ENCODE measurements at regions of chrX and their contacts with region 1.

Region 1: DNA sequence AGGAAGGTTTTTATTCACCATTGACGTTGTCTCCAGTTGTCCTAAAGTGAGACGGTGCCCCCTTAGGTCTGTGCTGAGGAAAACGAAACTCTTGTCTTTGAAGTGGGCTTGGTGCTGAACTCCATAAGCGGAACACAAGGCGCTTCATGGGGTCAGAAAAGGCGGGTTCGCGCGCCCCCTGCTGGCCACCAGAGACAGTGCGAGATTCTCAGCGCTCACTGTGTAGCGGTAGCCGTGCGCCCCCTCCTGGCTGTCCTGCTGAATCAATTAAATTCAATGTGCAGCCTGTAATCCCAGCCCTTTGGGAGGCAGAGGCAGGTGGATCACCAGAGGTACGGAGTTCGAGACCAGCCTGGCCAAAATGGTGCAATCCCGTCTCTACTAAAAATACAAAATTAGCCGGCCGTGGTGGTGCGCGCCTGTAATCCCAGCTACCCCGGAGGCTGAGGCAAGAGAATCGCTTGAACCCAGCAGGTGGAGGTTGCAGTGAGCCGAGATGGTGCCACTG is 64.1 kb downstream of the RLIM start:
- DNase-seq: peak; percentile 85
- H3K4me3 Mint-ChIP-seq: no peak overlapping the region
- H3K27ac Mint-ChIP-seq: no peak overlapping the region
- H3K4me1 Mint-ChIP-seq: peaks cover 2% of the 10 kb centered on the region
- H3K27me3 Mint-ChIP-seq: no peaks in the 10 kb centered on the region

Region 2: DNA sequence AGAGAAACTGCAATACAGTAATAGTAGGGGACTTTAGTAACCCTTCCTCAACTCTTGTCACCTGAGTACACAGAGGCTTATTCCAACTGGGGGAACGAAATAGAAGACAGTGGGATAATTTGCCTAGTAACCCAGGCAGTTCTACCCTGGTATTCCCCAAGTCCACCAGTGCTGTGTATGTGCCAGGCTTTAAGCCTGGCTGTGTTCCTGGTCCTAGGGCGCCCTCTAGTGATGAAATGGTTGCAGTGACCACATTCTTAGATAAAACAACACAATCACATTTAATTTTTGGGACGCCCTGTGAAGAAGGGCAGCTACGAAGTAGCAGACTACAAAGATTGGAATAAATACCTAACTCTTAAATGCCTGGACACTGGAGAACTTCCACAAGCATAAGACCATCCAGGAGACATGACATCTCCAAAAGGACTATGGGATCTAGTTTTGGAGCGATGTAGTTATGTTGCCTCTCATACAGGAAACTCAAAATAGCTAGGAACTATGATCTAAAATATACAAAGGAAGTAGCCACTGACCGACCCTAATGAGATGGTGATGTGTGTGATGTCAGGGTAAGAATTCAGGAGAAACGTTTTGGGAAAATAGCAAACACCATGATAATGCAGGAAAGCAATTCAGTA is 534.9 kb before region 1 on chrX:
- CTCF ChIA-PET with region 1: no interaction called
- intact Hi-C with region 1: loop called (anchors 2 kb)
- DNase-seq: peak; percentile 72
- H3K4me3 Mint-ChIP-seq: no peak overlapping the region
- H3K27ac Mint-ChIP-seq: no peak overlapping the region
- H3K4me1 Mint-ChIP-seq: no peaks in the 10 kb centered on the region
- H3K27me3 Mint-ChIP-seq: no peaks in the 10 kb centered on the region

Region 3: DNA sequence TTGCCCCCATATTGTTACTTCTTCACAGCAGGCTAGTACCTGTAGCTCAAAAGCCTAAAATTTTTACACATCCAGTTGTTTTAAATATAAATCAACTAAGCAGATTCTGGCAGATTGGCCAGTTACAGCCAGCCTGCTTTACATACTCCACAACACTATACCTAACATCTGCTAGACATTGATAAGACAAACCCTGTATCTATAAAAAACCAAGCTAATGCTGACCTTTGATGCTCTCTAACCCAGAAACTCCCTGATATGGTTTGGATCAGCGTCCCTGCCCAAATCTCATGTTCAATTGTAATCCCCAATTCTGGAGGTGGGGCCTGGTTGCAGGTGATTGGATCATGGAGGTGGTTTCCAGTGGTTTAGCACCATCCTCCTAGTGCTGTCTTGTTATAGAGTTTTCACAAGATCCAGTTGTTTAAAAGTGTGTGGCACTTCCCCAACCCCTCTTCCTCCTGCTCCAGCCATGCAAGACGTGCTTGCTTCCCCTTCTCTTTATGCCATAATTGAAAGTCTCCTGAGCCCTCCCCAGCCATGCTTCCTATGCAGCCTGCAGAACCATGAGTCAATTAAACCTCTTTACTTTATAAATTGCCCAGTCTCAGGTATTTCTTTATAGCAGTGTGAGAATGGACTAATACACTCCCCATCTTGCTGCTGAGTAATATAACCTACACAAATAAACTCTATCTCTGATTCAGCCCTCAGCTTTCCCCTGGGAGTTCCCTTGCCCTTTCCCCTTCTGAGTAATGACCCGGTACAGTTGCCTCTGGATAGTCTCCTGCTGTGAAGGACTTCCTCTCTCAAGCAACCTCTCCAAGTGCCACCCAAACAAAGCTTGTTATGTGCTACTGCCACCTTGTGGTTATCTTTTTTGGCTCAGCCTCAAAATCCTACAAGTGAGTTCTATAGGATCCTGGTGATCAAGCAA is 206.7 kb before region 1 on chrX:
- CTCF ChIA-PET with region 1: no interaction called
- intact Hi-C with region 1: loop called (anchors 1 kb)
- DNase-seq: peak; percentile 53
- H3K4me3 Mint-ChIP-seq: no peak overlapping the region
- H3K27ac Mint-ChIP-seq: no peak overlapping the region
- H3K4me1 Mint-ChIP-seq: peaks cover 4% of the 10 kb centered on the region
- H3K27me3 Mint-ChIP-seq: no peaks in the 10 kb centered on the region

Region 4: DNA sequence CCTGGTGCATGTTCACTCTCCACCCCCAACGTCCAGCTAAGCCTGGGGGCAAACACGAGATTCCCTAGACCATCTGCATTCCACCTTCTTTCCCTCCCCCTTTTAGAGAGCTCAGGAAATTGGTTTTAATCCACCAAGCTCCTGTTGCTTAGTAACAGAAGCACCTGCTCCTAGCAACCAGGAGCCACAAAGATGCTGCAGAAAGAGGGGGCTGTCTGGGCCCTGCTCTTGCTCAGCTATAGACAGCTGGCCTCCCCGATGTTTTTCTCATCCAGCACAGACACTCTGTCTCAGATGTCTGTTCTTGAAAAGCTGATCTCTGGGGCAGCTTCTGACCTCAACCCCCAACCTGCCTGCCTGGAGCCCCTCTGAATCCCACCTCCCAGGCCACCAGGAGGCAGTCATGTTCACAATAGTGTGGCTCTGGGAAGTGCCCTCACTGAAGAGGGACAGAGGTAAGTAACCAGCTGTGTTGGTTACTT is 57.6 kb before region 1 on chrX:
- CTCF ChIA-PET with region 1: interaction called, 4 read pairs
- intact Hi-C with region 1: loop called (anchors 5 kb)
- DNase-seq: peak; percentile 12
- H3K4me3 Mint-ChIP-seq: no peak overlapping the region
- H3K27ac Mint-ChIP-seq: no peak overlapping the region
- H3K4me1 Mint-ChIP-seq: no peaks in the 10 kb centered on the region
- H3K27me3 Mint-ChIP-seq: no peaks in the 10 kb centered on the region

Region 5: GRCh38 chrX:75603833-75604232 is 1053.5 kb after region 1 on chrX:
- CTCF ChIA-PET with region 1: interaction called, 3 read pairs
- intact Hi-C with region 1: loop called (anchors 5 kb)
- DNase-seq: no peak
- H3K4me3 Mint-ChIP-seq: no peak overlapping the region
- H3K27ac Mint-ChIP-seq: no peak overlapping the region
- H3K4me1 Mint-ChIP-seq: no peaks in the 10 kb centered on the region
- H3K27me3 Mint-ChIP-seq: no peaks in the 10 kb centered on the region

Measured in activated naive CD4-positive, alpha-beta T cell treated with anti-CD3 and anti-CD28 coated beads for 36 hours (primary cell).